Activated CD8-positive, alpha-beta T cell treated with anti-CD3 and anti-CD28 coated beads, Interleukin-2, amount 10 ng/mL, durations not matched to agents 7 days and 5 days (primary cell): ENCODE measurements at regions of chr6 and their contacts with region 1.

Region 1: DNA sequence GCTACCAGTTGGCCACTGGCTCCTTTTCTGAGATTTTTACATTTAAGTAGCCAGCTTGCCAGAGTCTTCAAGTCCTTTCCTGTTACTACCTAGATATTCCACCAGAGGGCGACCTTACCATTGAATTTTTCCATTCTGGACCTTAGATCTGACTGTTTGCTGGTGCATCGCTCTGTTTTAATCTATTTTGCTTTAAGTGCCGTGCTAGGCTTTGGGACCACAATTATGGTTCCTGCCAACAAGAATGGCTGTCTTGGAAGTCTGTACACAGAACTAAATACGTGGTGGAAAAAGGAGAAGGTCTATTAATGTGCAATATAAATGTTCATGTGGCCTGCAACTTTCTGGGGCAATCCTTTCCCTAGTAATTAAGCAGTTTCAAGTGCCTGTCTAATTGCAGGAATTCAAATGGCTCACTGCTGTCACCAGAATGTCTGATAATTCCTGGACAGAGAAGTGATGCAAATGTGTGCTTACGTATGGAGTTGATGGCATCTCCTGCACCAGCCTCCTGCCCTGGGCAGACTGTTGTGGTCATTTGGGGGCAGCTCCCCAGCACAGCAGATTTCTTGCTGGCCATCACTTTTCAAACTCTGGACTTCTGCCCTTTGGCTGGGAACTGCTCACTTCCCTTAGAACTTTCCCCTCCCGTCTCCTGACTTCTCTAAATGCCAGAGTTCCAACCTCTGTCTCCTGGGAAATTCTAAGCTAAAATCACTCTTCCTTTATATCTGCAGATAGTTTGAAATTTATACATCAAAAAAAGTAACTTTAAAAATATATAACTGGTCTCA is 5.6 kb upstream of the HLA-DOA start:
- DNase-seq: peak; percentile 78
- ATAC-seq: peak; percentile 57
- H3K4me3 Mint-ChIP-seq: no peak overlapping the region
- H3K27ac Mint-ChIP-seq: no peak overlapping the region
- H3K4me1 Mint-ChIP-seq: peaks cover 28% of the 10 kb centered on the region
- H3K27me3 Mint-ChIP-seq: peaks cover 6% of the 10 kb centered on the region

Region 2: DNA sequence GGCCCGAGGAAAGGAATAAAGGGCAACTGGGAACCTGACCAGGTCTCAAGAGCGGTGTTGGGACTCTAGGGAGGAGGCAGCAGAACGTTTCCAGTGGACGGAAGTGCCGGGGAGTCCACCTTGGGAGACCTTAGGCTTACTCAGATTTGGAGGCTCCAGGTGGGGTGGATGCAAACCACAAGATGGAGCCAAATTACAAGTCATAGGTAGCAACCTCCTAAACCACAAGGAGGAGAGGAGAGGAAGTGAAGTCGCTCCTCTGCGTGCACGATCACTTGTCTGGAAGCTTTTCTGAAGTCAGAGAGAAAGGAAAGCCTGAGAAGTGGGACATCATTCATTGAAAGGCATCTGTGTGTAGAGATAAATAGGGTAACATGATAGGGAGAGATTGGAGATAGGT is 15.0 kb before region 1 on chr6:
- CTCF ChIA-PET with region 1: interaction called, 27 read pairs
- POLR2A ChIA-PET with region 1: no interaction called
- DNase-seq: peak; percentile 59
- ATAC-seq: peak; percentile 67
- H3K4me3 Mint-ChIP-seq: no peak overlapping the region
- H3K27ac Mint-ChIP-seq: no peak overlapping the region
- H3K4me1 Mint-ChIP-seq: peaks cover 11% of the 10 kb centered on the region
- H3K27me3 Mint-ChIP-seq: peaks cover 36% of the 10 kb centered on the region

Region 3: GRCh38 chr6:33073431-33073871 is 58.4 kb after region 1 on chr6 and contains the start of gene HLA-DPA1:
- CTCF ChIA-PET with region 1: interaction called, 12 read pairs
- POLR2A ChIA-PET with region 1: interaction called, 3 read pairs
- DNase-seq: peak; percentile 64
- ATAC-seq: peak; percentile 74
- H3K4me3 Mint-ChIP-seq: peak within 1 kb of the TSS; percentile 76
- H3K27ac Mint-ChIP-seq: peak within 1 kb of the TSS; percentile 12
- H3K4me1 Mint-ChIP-seq: peaks cover 43% of the 10 kb centered on the region
- H3K27me3 Mint-ChIP-seq: peaks cover 6% of the 10 kb centered on the region
- total RNA-seq, gene HLA-DPA1: 39.1 to 40.0 TPM

Region 4: GRCh38 chr6:33088931-33089620 is 74.0 kb after region 1 on chr6:
- CTCF ChIA-PET with region 1: interaction called, 29 read pairs
- POLR2A ChIA-PET with region 1: interaction called, 3 read pairs
- DNase-seq: no peak
- ATAC-seq: no peak
- H3K4me3 Mint-ChIP-seq: no peak overlapping the region
- H3K27ac Mint-ChIP-seq: no peak overlapping the region
- H3K4me1 Mint-ChIP-seq: no peaks in the 10 kb centered on the region
- H3K27me3 Mint-ChIP-seq: peaks cover 4% of the 10 kb centered on the region

Region 5: GRCh38 chr6:33147807-33148666 is 133.0 kb after region 1 on chr6:
- CTCF ChIA-PET with region 1: interaction called, 10 read pairs
- POLR2A ChIA-PET with region 1: interaction called, 3 read pairs
- DNase-seq: no peak
- ATAC-seq: no peak
- H3K4me3 Mint-ChIP-seq: no peak overlapping the region
- H3K27ac Mint-ChIP-seq: no peak overlapping the region
- H3K4me1 Mint-ChIP-seq: peaks cover 7% of the 10 kb centered on the region
- H3K27me3 Mint-ChIP-seq: peaks cover 20% of the 10 kb centered on the region